ENCODE measurements at regions of chr12 and their contacts with region 1.

Region 1: DNA sequence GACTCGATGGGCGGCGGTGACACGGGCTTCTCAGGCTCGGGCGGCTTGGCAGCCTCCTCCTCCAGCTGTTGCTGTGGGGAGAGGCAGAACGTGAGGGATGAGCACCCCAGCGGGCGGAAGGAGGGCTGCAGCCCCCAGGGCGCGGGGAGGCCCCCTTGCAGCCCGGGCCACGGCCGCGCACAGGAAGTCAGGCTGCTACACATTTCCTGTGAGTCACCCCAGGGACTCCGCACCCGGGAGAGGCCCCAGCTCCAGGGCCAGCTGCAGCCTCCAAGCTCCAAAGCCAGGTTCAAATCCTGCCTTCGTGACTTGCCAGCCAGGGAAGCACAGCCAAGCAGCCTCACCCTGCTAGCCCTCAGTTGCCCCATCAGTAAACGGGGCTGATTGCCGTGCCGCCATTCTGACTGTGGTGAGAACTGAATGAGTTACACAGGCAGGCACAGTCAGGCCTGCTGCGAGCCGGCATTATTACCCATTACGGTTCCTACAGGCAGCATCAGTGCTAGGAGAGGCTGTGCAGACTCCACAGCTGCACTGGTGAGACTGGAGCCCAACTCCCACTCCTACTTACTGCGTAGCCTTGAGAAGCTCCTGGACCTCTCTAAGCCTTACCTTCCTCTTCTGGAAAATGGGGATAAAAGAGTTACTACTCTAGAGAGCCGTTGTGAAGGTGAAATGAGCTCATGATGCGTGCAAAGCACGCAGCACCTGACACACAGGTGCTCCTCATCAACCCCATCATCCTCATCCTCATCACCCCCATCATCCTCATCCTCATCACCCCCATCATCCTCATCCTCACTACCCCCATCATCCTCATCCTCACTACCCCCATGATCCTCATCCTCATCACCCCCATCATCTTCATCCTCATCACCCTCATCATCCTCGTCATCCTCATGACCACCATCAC is 100.9 kb downstream of the NCOR2 start:
- DNase-seq: peak; percentile 88 to 95
- ATAC-seq: peak; percentile 94 to 99 (median 98)
- H3K4me3 ChIP-seq: peak overlapping the region; percentile 31
- H3K4me3 Mint-ChIP-seq: peak overlapping the region; percentile 81
- H3K27ac ChIP-seq: peak overlapping the region; percentile 85
- H3K27ac Mint-ChIP-seq: peak overlapping the region; percentile 87 to 94
- H3K4me1 ChIP-seq: peaks cover 38% of the 10 kb centered on the region
- H3K4me1 Mint-ChIP-seq: peaks cover 42 to 70% of the 10 kb centered on the region in 2 donors
- H3K27me3 ChIP-seq: no peaks in the 10 kb centered on the region
- H3K27me3 Mint-ChIP-seq: no peaks in the 10 kb centered on the region
- CTCF ChIP-seq: peak; percentile 57

Region 2: DNA sequence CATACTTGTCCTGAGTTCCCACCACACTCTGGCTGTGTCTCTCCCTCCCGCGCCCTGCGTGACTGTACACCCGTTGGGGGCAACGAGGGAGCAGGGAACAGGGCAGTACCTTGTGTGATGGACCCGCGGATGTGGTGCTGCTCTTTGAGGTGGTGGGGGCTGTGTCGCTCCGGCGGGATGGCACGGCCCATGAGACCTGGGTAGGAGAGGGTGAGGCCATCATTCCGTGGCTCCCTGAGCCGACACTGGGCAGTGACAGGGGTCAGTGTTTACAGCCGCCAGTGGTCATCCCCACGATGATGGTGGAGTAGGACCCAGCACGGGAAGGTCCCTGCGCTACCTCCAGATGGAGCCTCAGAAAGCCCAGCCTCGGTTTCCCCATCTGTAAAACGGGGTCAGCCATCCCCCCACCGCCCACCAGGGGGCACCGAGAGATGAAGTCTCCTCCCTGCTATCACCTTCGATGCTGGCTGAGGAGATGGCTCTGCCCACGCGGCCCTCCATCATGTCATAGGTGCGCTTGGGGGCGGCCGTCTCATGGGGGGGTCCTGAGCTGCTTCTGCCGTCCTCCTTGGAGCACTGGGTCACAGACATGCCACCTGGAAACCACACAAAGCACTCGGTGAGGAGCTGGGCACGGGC is 118.6 kb before region 1 on chr12:
- intact Hi-C with region 1: loop called (anchors 5 kb)
- DNase-seq: peak in 1 of 2 donors; percentile 47
- ATAC-seq: peak in 1 of 3 donors; percentile 40
- H3K4me3 ChIP-seq: no peak overlapping the region
- H3K4me3 Mint-ChIP-seq: no peak overlapping the region
- H3K27ac ChIP-seq: no peak overlapping the region
- H3K27ac Mint-ChIP-seq: no peak overlapping the region
- H3K4me1 ChIP-seq: no peaks in the 10 kb centered on the region
- H3K4me1 Mint-ChIP-seq: peaks cover 0 to 7% of the 10 kb centered on the region in 2 donors
- H3K27me3 ChIP-seq: no peaks in the 10 kb centered on the region
- H3K27me3 Mint-ChIP-seq: no peaks in the 10 kb centered on the region
- CTCF ChIP-seq: peak; percentile 37

Region 3: GRCh38 chr12:124453419-124454351 is 12.8 kb before region 1 on chr12:
- intact Hi-C with region 1: loop called (anchors 1 kb)
- DNase-seq: peak; percentile 83 to 91
- ATAC-seq: peak; percentile 68 to 86 (median 78)
- H3K4me3 ChIP-seq: peak overlapping the region; percentile 27
- H3K4me3 Mint-ChIP-seq: peak overlapping the region; percentile 80
- H3K27ac ChIP-seq: peak overlapping the region; percentile 96
- H3K27ac Mint-ChIP-seq: peak overlapping the region; percentile 73 to 96
- H3K4me1 ChIP-seq: peaks cover 95% of the 10 kb centered on the region
- H3K4me1 Mint-ChIP-seq: peaks cover 66 to 85% of the 10 kb centered on the region in 2 donors
- H3K27me3 ChIP-seq: no peaks in the 10 kb centered on the region
- H3K27me3 Mint-ChIP-seq: no peaks in the 10 kb centered on the region
- CTCF ChIP-seq: no peak

Region 4: DNA sequence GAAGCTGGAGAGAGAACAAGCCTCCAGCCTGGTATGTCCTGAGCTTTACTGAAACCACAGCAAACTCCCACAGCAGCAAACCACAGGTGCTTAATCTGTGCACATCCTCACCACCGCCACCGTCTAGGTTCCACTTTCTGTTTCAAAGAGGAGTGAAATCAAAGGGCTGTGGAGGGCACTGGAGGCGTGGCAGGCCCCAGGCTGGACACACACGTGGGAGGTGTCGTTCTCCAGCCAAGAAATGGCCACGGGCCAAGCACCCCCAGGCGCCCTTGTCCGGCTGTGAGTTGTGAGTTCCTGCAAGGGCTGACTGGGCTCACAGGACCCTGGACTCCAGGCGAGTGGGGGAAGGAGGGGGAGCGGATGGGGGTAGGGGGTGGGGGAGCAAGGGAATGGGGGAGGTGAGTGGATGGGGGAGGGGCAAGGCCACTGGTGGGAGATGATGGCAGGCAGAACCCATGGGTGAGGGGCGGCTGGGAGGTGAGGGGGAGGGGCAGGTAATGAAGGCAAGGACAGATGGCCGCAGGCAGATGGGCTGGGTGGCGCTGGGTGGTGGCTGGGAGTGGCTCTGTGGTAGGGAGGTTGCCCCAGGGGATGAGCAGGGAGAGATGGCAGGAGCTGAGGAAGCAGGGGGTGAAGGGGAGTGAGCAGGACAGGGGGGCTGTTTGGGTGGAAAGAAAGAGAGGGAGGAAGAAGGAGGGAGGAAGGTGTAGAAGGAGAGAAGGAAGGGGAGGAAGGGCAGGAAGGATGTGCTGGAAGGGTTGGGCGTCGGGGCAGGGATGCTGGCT is 14.2 kb after region 1 on chr12:
- intact Hi-C with region 1: no loop called
- DNase-seq: peak; percentile 40 to 65
- ATAC-seq: peak; percentile 63 to 86 (median 73)
- H3K4me3 ChIP-seq: no peak overlapping the region
- H3K4me3 Mint-ChIP-seq: peak overlapping the region; percentile 28
- H3K27ac ChIP-seq: no peak overlapping the region
- H3K27ac Mint-ChIP-seq: peak overlapping the region in 1 of 2 donors; percentile 39
- H3K4me1 ChIP-seq: peaks cover 36% of the 10 kb centered on the region
- H3K4me1 Mint-ChIP-seq: peaks cover 20 to 38% of the 10 kb centered on the region in 2 donors
- H3K27me3 ChIP-seq: no peaks in the 10 kb centered on the region
- H3K27me3 Mint-ChIP-seq: peaks cover 0 to 5% of the 10 kb centered on the region in 2 donors
- CTCF ChIP-seq: no peak

Measured in natural killer cell (primary cell).